Heart right ventricle (tissue), 16 donors: ENCODE measurements at regions of chr4 and their contacts with region 1.

Region 1: DNA sequence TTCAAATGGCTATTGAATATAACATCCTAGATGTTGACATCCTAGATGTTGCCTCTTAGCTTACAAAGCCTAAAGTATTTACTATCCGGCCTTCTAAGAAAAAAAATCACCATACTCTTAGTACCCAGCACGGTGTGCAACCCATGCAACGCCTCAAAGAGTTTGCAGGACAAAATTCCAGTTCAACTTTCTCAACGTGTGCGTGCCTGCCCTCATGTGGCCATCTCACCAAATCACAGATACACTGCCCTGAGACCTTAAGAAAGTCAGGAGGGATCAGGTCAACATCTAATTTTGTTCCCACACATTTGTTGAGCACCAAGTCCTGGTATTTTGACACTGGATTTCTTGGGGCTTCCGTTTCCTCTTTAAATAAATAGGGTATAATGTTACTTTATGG is 68.3 kb downstream of the CRMP1 start:
- DNase-seq: no peak
- ATAC-seq: no peak
- H3K4me3 ChIP-seq: no peak overlapping the region
- H3K27ac ChIP-seq: no peak overlapping the region
- H3K4me1 ChIP-seq: peaks cover 0 to 20% (median 6%) of the 10 kb centered on the region in 9 donors
- H3K27me3 ChIP-seq: no peaks in the 10 kb centered on the region
- CTCF ChIP-seq: peak in 7 of 9 donors; percentile 23 to 59 (median 37)

Region 2: GRCh38 chr4:5532100-5532499 is 292.5 kb before region 1 on chr4:
- intact Hi-C with region 1: no loop called
- DNase-seq: no peak
- ATAC-seq: no peak
- H3K4me3 ChIP-seq: no peak overlapping the region
- H3K27ac ChIP-seq: no peak overlapping the region
- H3K4me1 ChIP-seq: no peaks in the 10 kb centered on the region
- H3K27me3 ChIP-seq: peaks cover 0 to 5% (median 0%) of the 10 kb centered on the region in 7 donors
- CTCF ChIP-seq: no peak

Region 3: DNA sequence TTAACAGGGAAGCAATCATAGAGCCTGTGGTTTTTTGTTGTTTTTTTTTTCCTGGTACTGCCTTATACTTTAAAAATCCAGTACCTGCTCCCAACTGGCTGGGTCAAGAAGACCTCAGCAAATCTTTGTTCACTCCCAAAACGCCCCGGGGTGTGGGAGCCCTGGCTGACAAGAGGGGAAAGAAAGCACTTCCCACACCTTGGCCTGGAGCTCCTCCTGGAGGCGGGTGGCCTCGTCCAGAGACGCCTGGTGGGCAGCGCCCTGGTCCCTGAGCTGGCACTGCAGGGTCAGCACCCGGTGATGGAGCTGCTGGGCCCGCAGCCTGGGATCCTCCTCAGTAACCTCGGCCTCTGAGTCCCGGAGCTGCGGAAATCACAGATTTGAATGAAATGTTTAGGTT is 155.3 kb after region 1 on chr4:
- intact Hi-C with region 1: loop called in 2 of 10 experiments (anchors 5 to 10 kb)
- DNase-seq: no peak
- ATAC-seq: no peak
- H3K4me3 ChIP-seq: no peak overlapping the region
- H3K27ac ChIP-seq: no peak overlapping the region
- H3K4me1 ChIP-seq: no peaks in the 10 kb centered on the region
- H3K27me3 ChIP-seq: peaks cover 0 to 73% (median 61%) of the 10 kb centered on the region in 7 donors
- CTCF ChIP-seq: peak in 8 of 9 donors; percentile 6 to 56 (median 42)

Region 4: DNA sequence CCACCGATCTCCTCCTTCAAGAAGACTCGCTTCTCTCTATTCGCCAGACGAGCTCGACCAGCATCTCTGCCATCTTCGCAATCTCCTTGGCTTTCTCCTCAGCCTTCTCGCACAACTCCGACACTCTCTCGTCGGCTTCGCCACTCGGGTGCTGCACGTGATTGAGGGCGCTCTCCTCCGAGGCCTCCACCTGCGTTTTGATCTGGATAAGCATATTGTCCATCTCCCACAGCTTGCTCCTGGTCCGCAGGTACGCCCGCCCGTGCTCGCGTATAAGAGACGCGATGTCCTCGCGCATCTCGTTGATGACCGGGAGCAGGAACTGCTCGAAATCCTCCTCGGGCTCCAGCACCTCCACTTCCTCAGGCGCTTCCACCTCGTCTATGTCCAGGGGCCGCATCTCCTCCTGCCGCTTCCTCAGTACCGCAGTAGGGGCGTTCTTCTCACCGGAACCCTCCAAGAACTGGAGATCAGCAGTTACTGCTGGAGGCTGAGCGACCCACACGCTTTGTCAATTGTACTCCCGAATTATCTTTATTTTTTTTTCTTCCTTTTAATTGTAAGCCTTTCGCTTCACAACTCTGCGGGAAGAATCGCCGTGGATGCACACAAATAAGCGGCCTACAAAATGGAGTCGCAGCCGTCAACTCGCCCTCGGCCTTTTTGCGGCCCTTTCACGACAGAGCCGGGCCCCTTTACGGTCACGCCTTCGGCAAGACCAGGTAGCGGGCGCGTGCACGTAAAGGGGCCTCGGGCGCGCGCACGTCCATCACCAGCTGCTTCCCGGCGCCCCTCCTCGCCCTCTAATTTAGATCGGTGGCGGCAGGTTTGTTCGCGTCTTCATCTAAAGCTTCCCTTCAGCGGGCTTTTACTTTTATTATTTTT is 884.8 kb after region 1 on chr4 and contains the start of gene MRFAP1L1:
- intact Hi-C with region 1: no loop called
- DNase-seq: peak; percentile 96 to 98
- ATAC-seq: peak; percentile 80 to 97 (median 92)
- H3K4me3 ChIP-seq: peak within 1 kb of the TSS; percentile 32 to 93 (median 82)
- H3K27ac ChIP-seq: peak within 1 kb of the TSS; percentile 41 to 93 (median 84)
- H3K4me1 ChIP-seq: peaks cover 2 to 56% (median 48%) of the 10 kb centered on the region in 9 donors
- H3K27me3 ChIP-seq: no peaks in the 10 kb centered on the region
- CTCF ChIP-seq: peak in 3 of 9 donors; percentile 7 to 28 (median 10)
- total RNA-seq, gene MRFAP1L1: 37.5 to 49.9 (median 42.1) TPM